ENCODE measurements at regions of chr2 and their contacts with region 1.

Region 1: GRCh38 chr2:25673300-25674076 is at the start of gene DTNB:
- DNase-seq: peak; percentile 83
- ATAC-seq: peak; percentile 91 to 96
- total RNA-seq, gene DTNB: 6.1 to 7.0 TPM

Region 2: DNA sequence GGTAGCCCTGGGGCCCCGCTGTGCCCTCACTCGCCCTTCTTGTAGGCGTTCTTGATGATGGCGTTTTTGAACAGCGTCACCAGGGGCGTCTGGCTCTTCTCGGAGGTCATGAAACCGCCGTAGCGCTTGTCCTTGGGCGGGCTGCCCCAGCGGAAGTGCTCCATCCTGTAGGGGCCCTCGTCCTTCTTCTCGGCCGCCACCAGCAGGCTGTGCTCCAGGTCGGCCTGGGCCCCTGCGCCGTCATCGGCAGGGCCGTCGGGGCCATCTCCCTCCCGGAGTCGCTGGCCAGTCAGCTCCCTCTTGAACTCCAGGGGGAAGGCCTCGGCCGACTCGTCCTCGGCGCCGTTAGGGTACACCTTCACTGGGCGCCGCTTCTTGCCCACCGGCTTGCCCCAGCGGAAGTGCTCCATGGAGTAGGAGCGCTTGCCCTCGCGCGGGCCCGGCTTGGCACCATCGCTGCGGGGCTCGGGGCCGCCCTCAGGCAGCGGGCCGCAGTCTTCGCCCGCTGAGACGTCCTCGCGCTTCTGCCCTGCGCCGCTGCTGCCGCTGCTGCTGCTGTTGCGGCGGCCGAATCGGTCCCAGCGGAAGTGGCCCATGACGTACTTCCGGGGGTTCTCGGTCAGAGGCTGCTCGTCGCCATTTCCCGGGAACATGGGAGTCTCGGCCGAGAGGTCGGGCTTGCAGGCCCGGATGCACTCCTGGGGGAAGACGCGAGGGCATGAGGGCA is 512.3 kb before region 1 on chr2:
- intact Hi-C with region 1: no loop called
- DNase-seq: peak; percentile 78
- ATAC-seq: peak; percentile 73 to 81

Region 3: DNA sequence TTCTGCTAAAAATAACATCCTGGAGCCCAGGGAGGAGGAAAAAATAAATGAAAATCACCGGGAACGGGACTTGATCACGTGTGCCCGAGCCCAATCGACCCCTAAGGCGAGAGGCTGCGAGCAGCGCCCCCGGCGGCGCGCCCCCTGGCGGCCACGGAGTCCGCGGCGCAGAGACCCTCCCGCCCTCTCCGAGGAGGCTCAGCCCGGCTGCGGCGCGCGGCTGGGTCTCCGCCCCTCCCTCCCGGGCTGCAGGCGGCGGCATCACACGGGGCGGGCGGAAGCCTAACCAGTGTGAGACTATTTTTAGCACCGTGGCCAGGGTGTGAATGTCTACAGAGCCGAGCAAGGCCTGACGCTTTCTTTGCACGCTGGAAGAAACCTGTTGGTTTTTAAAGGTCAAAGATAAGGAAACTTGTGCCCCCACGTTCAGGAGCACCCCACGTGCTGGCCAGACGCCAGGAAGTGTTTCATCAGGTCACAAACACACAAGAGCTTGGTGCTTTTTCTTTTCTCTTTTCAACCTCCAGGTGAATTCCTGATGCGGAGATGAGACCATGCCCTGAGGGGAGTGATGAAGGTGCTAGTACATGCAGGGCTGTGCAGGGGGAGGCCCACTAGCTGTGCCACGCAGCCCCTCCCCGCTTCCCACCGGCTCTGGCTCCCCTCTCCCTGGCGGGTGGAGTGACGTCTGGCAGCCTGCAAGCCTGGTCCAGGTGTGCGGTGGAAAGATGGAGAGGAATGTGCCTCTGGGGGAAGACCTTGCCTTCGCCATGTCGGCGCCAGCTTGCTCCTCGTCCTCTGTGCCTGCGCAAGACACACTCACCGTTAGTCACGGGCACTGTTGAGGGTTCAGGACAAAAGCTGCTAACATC is 296.5 kb before region 1 on chr2:
- intact Hi-C with region 1: loop called in 1 of 2 experiments (anchors 10 kb)
- DNase-seq: peak; percentile 86
- ATAC-seq: peak; percentile 99 to 100

Region 4: DNA sequence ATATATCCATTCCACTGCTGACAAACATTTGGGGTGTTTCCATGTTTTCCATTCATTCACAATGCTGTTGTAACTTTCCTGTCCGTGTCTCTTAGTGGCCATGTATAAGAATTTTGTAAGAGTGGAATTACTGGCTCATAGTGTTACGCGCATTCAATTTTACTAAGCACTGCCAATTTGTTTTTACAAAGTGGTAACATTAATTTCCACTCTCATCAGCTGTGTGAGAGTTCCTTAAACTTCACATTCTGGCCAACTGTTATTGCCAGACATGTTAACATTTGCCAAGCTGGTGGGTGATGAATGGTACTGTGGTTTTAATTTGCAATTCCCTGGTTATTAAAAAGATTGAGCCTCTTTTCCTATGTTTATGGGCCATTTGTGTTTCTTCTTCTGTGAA is 134.4 kb before region 1 on chr2:
- intact Hi-C with region 1: no loop called
- DNase-seq: no peak
- ATAC-seq: no peak